Dorsolateral prefrontal cortex (tissue), 120 donors: ENCODE measurements at regions of chr7 and their contacts with region 1.

Region 1: DNA sequence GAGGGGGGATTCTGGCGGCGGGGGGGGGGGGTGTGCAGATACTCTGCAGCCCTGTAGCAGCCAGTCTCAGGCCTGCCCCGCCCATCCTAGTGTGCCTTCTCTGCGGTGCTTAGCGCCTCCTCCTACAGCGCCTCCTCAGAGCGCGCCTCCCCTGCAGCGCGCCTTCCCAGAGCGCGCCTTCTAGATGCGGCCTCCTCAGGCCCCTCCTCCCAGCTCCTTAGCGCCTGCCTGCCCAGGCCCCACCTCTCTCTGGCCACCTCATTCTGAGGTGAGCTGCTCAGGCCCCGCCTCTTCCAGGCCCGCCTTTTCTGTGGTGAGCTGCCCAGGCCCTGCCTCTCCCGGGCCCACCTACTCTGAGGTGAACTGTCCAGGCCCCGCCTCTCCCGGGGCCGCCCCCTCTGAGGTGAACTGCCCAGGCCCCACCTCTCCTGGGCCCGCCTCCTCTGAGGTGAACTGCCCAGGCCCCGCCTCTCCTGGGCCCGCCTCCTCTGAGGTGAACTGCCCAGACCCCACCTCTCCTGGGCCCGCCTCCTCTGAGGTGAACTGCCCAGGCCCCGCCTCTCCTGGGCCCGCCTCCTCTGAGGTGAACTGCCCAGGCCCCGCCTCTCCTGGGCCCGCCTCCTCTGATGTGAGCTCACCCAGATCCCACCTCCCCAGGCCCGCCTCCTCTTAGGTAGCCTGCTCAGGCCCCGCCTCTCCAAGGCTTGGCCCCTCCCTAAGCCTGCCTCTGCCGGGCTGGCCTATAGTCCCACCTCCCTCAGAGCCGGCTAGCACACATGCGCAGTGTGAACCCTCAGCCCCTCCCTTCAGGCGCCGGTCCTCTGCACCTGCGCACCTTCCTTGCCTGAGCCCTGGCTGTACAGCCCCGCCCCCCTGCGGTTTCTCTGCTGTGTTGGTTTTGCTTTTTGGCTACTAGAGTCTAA is 2.1 kb upstream of the SGCE start:
- DNase-seq: peak; percentile 69 to 96 (median 93)
- H3K4me3 ChIP-seq: peak overlapping the region; percentile 54 to 92 (median 78)
- H3K27ac ChIP-seq: peak overlapping the region in 53 of 59 donors; percentile 20 to 96 (median 73)
- H3K27me3 ChIP-seq: no peaks in the 10 kb centered on the region
- CTCF ChIP-seq: peak in 8 of 56 donors; percentile 6 to 29 (median 10)

Region 2: GRCh38 chr7:94395141-94396036 is 262.6 kb before region 1 on chr7:
- intact Hi-C with region 1: no loop called
- DNase-seq: no peak
- H3K4me3 ChIP-seq: peak overlapping the region in 57 of 59 donors; percentile 5 to 66 (median 42)
- H3K27ac ChIP-seq: peak overlapping the region in 37 of 59 donors; percentile 2 to 77 (median 40)
- H3K27me3 ChIP-seq: peaks cover 0 to 23% (median 5%) of the 10 kb centered on the region in 45 donors
- CTCF ChIP-seq: peak; percentile 44 to 81 (median 68)

Region 3: GRCh38 chr7:94509879-94510581 is 148.0 kb before region 1 on chr7:
- intact Hi-C with region 1: loop called (anchors 1 to 2 kb)
- DNase-seq: peak; percentile 51 to 80 (median 62)
- H3K4me3 ChIP-seq: peak overlapping the region; percentile 66 to 97 (median 88)
- H3K27ac ChIP-seq: peak overlapping the region; percentile 84 to 99 (median 96)
- H3K27me3 ChIP-seq: no peaks in the 10 kb centered on the region
- CTCF ChIP-seq: peak in 44 of 56 donors; percentile 7 to 65 (median 33)

Region 4: DNA sequence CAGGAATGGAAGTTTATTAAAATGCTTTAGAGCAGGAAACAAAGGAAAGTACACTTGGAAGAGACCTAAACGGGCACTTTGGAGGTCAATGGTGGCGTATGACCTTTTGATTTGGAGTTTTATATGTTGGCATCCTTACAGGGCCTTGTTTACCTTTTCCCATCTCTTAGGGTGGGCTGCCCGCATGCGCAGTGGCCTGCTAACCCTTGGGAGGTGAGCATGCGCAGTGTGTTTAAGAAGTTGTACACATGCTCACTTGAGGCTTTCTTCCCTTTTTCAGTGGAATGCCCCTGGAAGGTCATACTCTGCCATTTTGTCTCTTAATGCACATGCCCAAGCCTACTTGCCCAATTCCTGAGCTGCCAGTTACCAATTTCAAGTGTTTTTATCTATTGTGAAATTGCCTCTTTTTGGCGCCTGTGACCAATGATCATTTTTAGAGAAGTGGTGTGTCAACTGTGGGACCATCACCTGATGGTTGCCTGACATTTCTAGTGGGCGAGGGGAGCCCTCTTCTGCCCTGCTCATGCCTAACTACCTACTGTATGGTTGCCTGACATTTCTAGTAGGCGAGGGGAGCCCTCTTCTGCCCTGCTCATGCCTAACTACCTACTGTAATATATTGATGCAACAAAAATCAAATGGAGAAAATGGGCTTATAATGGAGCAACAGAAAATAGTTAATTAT is 387.3 kb after region 1 on chr7:
- intact Hi-C with region 1: loop called in 1 of 2 experiments (anchors 5 kb)
- DNase-seq: peak in 7 of 10 donors; percentile 25 to 80 (median 58)
- H3K4me3 ChIP-seq: no peak overlapping the region
- H3K27ac ChIP-seq: peak overlapping the region in 22 of 59 donors; percentile 22 to 96 (median 90)
- H3K27me3 ChIP-seq: no peaks in the 10 kb centered on the region
- CTCF ChIP-seq: peak in 52 of 56 donors; percentile 17 to 73 (median 45)

Region 5: GRCh38 chr7:95199779-95200558 is 541.9 kb after region 1 on chr7:
- intact Hi-C with region 1: loop called in 1 of 2 experiments (anchors 10 kb)
- DNase-seq: peak in 9 of 10 donors; percentile 43 to 80 (median 52)
- H3K4me3 ChIP-seq: no peak overlapping the region
- H3K27ac ChIP-seq: peak overlapping the region in 29 of 59 donors; percentile 1 to 67 (median 36)
- H3K27me3 ChIP-seq: no peaks in the 10 kb centered on the region
- CTCF ChIP-seq: peak; percentile 28 to 89 (median 78)

Region 6: GRCh38 chr7:95213809-95214492 is 555.9 kb after region 1 on chr7:
- intact Hi-C with region 1: loop called (anchors 5 to 10 kb)
- DNase-seq: peak in 7 of 10 donors; percentile 28 to 68 (median 45)
- H3K4me3 ChIP-seq: peak overlapping the region in 22 of 59 donors; percentile 2 to 43 (median 18)
- H3K27ac ChIP-seq: peak overlapping the region in 47 of 59 donors; percentile 1 to 80 (median 45)
- H3K27me3 ChIP-seq: no peaks in the 10 kb centered on the region
- CTCF ChIP-seq: no peak